Caco-2 (cell line): ENCODE measurements at regions of chr1 and their contacts with region 1.

Region 1: DNA sequence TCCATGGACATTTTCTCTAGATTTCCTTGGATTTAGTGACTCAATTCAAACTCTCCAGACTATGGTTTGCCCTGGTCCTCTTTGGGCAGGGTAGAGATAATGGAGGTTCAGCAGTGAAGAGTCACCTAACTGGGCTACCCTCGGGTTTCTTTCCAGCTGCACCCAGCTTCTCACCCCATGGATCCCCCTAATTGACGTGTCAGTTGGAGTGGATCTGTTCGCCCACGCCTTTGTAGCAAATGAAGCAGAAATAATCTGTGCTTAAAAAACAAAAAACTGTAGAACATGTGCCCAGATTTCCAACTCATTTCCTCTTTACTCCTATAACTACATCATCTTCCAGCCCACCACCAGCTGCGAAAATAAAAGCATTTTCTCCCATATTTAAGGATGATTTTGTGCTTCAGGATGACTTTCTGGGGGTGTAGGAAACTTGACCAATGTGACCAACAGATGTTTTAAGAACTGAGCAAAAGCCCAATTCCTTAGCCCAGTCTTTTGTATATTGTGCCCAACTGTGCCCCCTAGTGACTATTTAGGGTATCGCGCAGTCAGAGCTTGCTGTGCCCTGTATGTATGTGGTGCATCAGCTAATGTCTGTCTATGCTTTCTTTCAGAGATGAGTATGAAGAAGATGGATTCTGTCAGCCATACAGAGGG is 66.5 kb upstream of the UBE2U start:
- DNase-seq: peak; percentile 65 to 72
- H3K4me3 ChIP-seq: no peak overlapping the region
- H3K4me3 Mint-ChIP-seq: no peak overlapping the region
- H3K27ac Mint-ChIP-seq: no peak overlapping the region
- H3K4me1 ChIP-seq: peaks cover 8% of the 10 kb centered on the region
- H3K4me1 Mint-ChIP-seq: peaks cover 6% of the 10 kb centered on the region
- H3K27me3 ChIP-seq: no peaks in the 10 kb centered on the region
- H3K27me3 Mint-ChIP-seq: no peaks in the 10 kb centered on the region
- CTCF ChIP-seq: peak; percentile 57 to 65

Region 2: DNA sequence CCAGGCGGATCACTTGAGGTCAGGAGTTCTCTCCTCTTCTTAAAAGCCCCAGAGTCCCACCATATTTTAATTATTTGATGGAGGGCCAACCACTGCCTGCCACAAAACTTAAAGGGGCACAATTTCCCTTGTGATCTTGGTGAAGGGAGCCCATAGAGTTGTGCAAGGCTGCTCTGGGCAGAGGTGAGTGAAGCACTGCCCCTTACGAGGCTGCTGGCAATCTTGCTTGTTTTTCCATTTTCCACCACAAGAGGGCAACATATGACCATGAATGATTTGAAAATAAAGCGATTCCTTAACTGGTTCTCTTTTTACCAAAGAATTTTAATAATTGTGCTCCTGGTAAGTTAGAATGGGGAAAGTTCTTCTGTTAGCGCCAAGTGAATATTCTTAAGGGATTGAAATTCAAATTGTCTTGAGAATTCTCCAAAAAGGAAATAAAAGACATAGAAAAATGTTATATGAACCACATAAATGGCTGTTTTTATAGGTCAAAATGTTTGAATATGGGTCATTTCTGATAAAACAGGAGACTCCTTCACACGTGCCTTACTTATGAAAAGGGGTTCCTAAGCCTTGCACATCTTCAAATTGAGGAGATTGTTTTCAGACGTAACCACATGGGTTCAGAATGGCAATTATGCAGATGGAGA is 521.0 kb before region 1 on chr1:
- CTCF ChIA-PET with region 1: no interaction called
- POLR2A ChIA-PET with region 1: no interaction called
- intact Hi-C with region 1: loop called (anchors 1 kb)
- DNase-seq: peak; percentile 40 to 74
- H3K4me3 ChIP-seq: no peak overlapping the region
- H3K4me3 Mint-ChIP-seq: no peak overlapping the region
- H3K27ac Mint-ChIP-seq: no peak overlapping the region
- H3K4me1 ChIP-seq: no peaks in the 10 kb centered on the region; the same call in 1 of the 2 replicates
- H3K4me1 Mint-ChIP-seq: peaks cover 11% of the 10 kb centered on the region
- H3K27me3 ChIP-seq: no peaks in the 10 kb centered on the region
- H3K27me3 Mint-ChIP-seq: no peaks in the 10 kb centered on the region
- CTCF ChIP-seq: peak; percentile 37 to 59

Region 3: GRCh38 chr1:63674238-63674864 is 462.5 kb before region 1 on chr1:
- CTCF ChIA-PET with region 1: interaction called, 14 read pairs
- POLR2A ChIA-PET with region 1: no interaction called
- intact Hi-C with region 1: loop called (anchors 1 kb)
- DNase-seq: peak; percentile 83 to 89
- H3K4me3 ChIP-seq: no peak overlapping the region
- H3K4me3 Mint-ChIP-seq: no peak overlapping the region
- H3K27ac Mint-ChIP-seq: peak overlapping the region; percentile 19
- H3K4me1 ChIP-seq: peaks cover 9% of the 10 kb centered on the region
- H3K4me1 Mint-ChIP-seq: peaks cover 16% of the 10 kb centered on the region
- H3K27me3 ChIP-seq: no peaks in the 10 kb centered on the region
- H3K27me3 Mint-ChIP-seq: no peaks in the 10 kb centered on the region
- CTCF ChIP-seq: peak; percentile 38 to 56

Region 4: DNA sequence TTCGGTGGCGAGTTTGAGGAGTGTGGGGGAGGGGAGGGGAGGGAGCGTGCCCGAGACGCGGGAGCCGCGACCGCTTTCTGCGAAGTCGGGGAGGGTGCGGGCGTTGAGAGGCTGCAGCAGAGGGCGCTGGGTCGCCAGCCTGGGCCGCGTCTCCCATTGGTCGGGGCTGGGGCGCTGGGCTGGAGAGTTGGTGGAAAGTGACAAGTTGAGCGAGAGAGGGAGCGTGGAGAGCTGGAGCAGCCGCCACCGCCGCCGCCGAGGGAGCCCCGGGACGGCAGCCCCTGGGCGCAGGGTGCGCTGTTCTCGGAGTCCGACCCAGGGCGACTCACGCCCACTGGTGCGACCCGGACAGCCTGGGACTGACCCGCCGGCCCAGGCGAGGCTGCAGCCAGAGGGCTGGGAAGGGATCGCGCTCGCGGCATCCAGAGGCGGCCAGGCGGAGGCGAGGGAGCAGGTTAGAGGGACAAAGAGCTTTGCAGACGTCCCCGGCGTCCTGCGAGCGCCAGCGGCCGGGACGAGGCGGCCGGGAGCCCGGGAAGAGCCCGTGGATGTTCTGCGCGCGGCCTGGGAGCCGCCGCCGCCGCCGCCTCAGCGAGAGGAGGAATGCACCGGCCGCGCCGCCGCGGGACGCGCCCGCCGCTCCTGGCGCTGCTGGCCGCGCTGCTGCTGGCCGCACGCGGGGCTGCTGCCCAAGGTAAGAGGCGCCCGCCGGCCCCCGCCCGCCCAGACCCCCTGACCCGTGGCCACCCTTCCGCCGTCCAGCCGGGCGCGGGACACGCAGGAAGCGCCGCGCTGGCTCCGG is 362.9 kb before region 1 on chr1 and contains the start of gene ROR1:
- CTCF ChIA-PET with region 1: interaction called, 5 read pairs
- POLR2A ChIA-PET with region 1: no interaction called
- intact Hi-C with region 1: loop called (anchors 2 kb)
- DNase-seq: peak; percentile 87 to 90
- H3K4me3 ChIP-seq: peak within 1 kb of the TSS; percentile 84
- H3K4me3 Mint-ChIP-seq: peak within 1 kb of the TSS; percentile 97
- H3K27ac Mint-ChIP-seq: peak within 1 kb of the TSS; percentile 77
- H3K4me1 ChIP-seq: peaks cover 13% of the 10 kb centered on the region
- H3K4me1 Mint-ChIP-seq: peaks cover 12% of the 10 kb centered on the region
- H3K27me3 ChIP-seq: no peaks in the 10 kb centered on the region
- H3K27me3 Mint-ChIP-seq: no peaks in the 10 kb centered on the region
- CTCF ChIP-seq: peak; percentile 32 to 64
- total RNA-seq, gene ROR1: 37.2 TPM in 2 replicates

Region 5: GRCh38 chr1:63920154-63921117 is 216.4 kb before region 1 on chr1:
- CTCF ChIA-PET with region 1: interaction called, 4 read pairs
- POLR2A ChIA-PET with region 1: no interaction called
- intact Hi-C with region 1: loop called (anchors 2 kb)
- DNase-seq: peak; percentile 55 to 75
- H3K4me3 ChIP-seq: no peak overlapping the region
- H3K4me3 Mint-ChIP-seq: peak overlapping the region; percentile 45
- H3K27ac Mint-ChIP-seq: peak overlapping the region; percentile 72
- H3K4me1 ChIP-seq: peaks cover 65% of the 10 kb centered on the region
- H3K4me1 Mint-ChIP-seq: peaks cover 53% of the 10 kb centered on the region
- H3K27me3 ChIP-seq: no peaks in the 10 kb centered on the region
- H3K27me3 Mint-ChIP-seq: no peaks in the 10 kb centered on the region
- CTCF ChIP-seq: no peak

Region 6: DNA sequence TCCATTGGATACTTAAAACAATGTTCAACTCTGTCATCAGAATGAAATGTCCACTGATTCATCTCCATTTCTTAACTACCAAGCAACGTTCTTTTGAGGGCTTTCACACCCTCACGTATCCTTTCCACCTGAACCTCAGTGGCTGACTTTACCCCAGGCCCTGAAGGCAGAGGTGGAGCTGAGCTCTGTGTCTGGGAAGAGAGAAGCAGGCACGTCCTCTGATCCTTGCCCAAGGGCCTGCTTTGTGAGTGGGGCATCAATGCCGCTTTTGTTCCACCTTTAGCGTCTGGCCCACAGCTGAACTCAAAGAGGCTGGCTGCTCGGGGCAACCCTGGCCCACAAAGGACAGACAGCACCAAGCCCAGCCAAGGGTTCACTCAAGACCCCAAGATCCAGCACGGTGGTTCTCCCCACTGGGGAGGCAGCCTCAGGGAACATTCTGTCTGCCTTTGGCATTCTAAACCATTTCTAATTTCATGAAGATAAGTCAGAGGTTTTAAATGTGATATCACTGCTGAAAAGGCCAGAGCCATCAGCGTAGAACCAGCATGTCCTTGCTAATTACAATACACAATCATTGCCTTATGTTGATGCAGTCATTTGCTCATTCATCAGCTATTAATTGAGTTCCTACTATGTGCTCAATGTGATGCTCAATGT is 59.5 kb before region 1 on chr1:
- CTCF ChIA-PET with region 1: interaction called, 5 read pairs
- POLR2A ChIA-PET with region 1: no interaction called
- intact Hi-C with region 1: loop called (anchors 5 kb)
- DNase-seq: no peak
- H3K4me3 ChIP-seq: no peak overlapping the region
- H3K4me3 Mint-ChIP-seq: no peak overlapping the region
- H3K27ac Mint-ChIP-seq: no peak overlapping the region
- H3K4me1 ChIP-seq: peaks cover 11% of the 10 kb centered on the region
- H3K4me1 Mint-ChIP-seq: no peaks in the 10 kb centered on the region
- H3K27me3 ChIP-seq: no peaks in the 10 kb centered on the region
- H3K27me3 Mint-ChIP-seq: no peaks in the 10 kb centered on the region
- CTCF ChIP-seq: no peak